ENCODE measurements at regions of chr17 and their contacts with region 1.

Region 1: DNA sequence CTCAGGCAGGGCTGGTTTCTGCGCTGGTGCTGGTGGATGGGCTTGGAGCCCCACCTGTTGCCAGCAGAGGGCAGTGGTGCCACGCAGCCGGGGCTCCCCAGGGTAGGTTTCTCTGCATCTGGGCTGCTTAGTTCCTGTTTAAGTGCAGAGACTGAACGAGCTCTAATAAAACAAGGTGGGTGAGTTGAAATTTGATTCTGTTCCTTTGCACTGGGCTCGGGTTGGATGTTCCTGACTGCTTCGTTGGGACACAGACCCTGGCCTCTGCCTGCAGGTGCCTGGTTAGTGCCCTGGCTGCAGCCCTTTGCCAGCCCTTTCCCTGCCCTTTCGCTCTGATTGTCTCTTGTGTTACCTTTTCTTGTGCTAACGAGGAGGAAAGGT is 30.0 kb downstream of the TBCD start:
- DNase-seq: peak; percentile 79 to 85
- ATAC-seq: peak; percentile 94 to 98 (median 96)
- H3K4me3 ChIP-seq: peak overlapping the region in 6 of 10 donors; percentile 6 to 28 (median 26)
- H3K27ac ChIP-seq: peak overlapping the region in 9 of 10 donors; percentile 53 to 84 (median 65)
- H3K4me1 ChIP-seq: peaks cover 0 to 14% (median 6%) of the 10 kb centered on the region in 9 donors
- H3K27me3 ChIP-seq: no peaks in the 10 kb centered on the region
- CTCF ChIP-seq: peak; percentile 86 to 99 (median 97)

Region 2: DNA sequence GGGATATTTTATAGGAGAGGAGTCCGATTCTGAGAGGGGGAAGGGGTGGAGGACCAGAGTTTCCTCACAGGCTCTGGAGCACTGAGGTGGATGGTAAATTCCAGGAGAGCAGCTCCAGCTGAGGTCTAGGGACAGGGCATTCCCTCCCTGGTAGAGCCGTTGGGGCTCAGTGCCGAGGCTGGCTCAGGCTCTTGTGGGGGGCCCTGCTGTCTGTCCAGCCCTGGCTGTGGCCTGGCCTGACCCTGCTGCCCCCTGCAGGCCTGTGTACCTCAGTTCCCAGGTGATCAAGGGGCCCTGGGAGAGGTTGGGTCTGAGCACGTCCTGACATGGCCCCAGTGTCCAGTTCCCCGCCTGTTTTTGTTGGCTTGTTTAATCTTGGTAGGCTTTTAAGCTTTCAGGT is 41.1 kb after region 1 on chr17:
- intact Hi-C with region 1: no loop called
- DNase-seq: no peak
- ATAC-seq: peak in 5 of 8 donors; percentile 52 to 71 (median 55)
- H3K4me3 ChIP-seq: no peak overlapping the region
- H3K27ac ChIP-seq: peak overlapping the region in 3 of 10 donors; percentile 14 to 65 (median 28)
- H3K4me1 ChIP-seq: peaks cover 0 to 12% (median 0%) of the 10 kb centered on the region in 9 donors
- H3K27me3 ChIP-seq: no peaks in the 10 kb centered on the region
- CTCF ChIP-seq: peak in 6 of 9 donors; percentile 8 to 30 (median 25)

Region 3: GRCh38 chr17:82848022-82848592 is 66.2 kb after region 1 on chr17:
- intact Hi-C with region 1: loop called in 4 of 10 experiments (anchors 2 to 10 kb)
- DNase-seq: peak in 1 of 2 donors; percentile 50
- ATAC-seq: peak in 4 of 8 donors; percentile 7 to 27 (median 22)
- H3K4me3 ChIP-seq: peak overlapping the region in 6 of 10 donors; percentile 23 to 58 (median 38)
- H3K27ac ChIP-seq: peak overlapping the region; percentile 20 to 89 (median 70)
- H3K4me1 ChIP-seq: peaks cover 0 to 34% (median 12%) of the 10 kb centered on the region in 9 donors
- H3K27me3 ChIP-seq: no peaks in the 10 kb centered on the region
- CTCF ChIP-seq: no peak

Region 4: DNA sequence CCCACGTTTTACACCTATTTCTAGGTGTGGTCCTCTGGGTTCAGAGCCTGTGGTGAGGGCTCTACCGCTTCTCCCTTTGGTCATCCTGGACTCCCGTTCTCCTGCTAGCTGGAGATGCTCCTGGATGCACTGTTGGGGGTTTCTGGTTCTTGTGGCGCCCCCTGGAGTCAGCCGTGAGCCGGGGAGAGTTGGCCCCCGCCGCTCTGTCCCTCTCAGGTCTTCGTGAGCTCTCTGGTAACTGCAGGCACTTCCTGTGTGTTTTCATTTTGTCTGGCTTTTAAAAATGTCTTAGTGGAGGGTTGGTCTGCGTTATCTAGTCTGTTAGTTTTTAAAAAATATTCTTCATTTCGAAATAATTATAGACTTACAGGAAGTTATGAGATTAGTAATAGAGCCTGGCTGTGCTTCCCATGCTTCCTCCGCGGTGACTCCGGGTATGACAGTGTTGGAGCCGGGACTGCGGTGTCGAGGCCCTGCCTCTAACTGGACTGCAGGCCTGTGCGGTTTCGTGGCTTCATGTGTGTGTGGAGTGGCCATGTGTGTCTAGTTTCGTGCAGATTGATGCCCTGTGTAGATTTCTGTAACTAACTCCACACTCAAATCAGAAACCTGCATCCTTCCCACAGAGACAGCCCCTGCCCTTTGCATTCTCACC is 135.9 kb after region 1 on chr17:
- intact Hi-C with region 1: loop called in 9 of 10 experiments (anchors 2 to 10 kb)
- DNase-seq: no peak
- ATAC-seq: peak in 3 of 8 donors; percentile 30 to 39 (median 36)
- H3K4me3 ChIP-seq: no peak overlapping the region
- H3K27ac ChIP-seq: peak overlapping the region in 1 of 10 donors; percentile 31
- H3K4me1 ChIP-seq: peaks cover 0 to 24% (median 6%) of the 10 kb centered on the region in 9 donors
- H3K27me3 ChIP-seq: no peaks in the 10 kb centered on the region
- CTCF ChIP-seq: peak in 8 of 9 donors; percentile 13 to 59 (median 50)

Region 5: GRCh38 chr17:82962864-82963684 is 181.2 kb after region 1 on chr17:
- intact Hi-C with region 1: loop called in 3 of 10 experiments (anchors 5 kb)
- DNase-seq: peak; percentile 82 to 83
- ATAC-seq: peak; percentile 84 to 96 (median 94)
- H3K4me3 ChIP-seq: peak overlapping the region in 8 of 10 donors; percentile 3 to 36 (median 26)
- H3K27ac ChIP-seq: peak overlapping the region in 8 of 10 donors; percentile 52 to 85 (median 68)
- H3K4me1 ChIP-seq: peaks cover 3 to 16% (median 11%) of the 10 kb centered on the region in 9 donors
- H3K27me3 ChIP-seq: no peaks in the 10 kb centered on the region
- CTCF ChIP-seq: peak; percentile 51 to 89 (median 86)

Region 6: DNA sequence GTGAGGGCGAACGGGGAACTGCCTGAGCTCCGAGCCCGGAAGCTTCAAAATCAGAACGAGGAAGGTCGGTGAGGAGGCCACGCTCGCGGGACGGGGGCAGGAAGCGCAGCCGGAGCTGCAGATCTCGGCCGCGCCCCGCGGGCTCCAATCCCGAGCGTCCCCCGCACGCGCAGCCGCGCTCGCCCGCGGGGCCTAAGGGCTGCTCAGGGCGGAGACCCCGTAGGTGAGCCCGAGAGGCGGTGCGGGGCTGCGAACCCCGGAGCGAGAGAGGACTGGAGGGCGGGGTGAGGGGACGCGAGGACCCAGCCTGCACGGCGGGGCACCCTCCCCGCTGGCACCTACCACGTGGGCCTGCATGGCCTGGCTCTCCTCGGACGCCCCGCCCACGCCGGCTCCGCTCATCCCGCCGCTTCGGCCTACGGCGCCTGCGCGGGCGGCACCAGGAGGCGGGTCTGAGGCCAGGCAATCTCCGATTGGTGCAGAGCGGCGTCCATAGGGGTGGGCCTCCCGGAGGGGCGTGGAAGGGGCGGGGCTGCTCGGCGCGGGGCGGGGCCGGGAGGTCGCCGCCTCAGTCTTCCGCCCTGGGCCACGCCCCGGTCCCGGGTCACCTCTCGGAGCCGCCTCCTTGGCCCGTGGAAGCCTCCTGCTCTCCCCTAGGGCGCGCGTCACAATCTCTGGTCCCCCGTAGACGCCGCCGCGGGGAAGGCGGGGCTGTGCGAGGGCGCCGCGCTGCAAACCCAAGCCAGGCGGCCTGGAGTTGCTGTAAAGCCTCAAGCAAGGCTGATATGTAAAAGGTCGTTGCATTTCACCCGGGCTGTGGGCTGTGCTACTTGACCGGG is 269.7 kb after region 1 on chr17:
- intact Hi-C with region 1: loop called in 1 of 10 experiments (anchors 10 kb)
- DNase-seq: peak; percentile 96 to 98
- ATAC-seq: peak; percentile 97 to 99 (median 98)
- H3K4me3 ChIP-seq: peak overlapping the region; percentile 52 to 98 (median 82)
- H3K27ac ChIP-seq: peak overlapping the region; percentile 70 to 96 (median 86)
- H3K4me1 ChIP-seq: peaks cover 4 to 67% (median 27%) of the 10 kb centered on the region in 9 donors
- H3K27me3 ChIP-seq: no peaks in the 10 kb centered on the region
- CTCF ChIP-seq: peak in 3 of 9 donors; percentile 15 to 22 (median 20)

Measured in heart right ventricle (tissue), 16 donors.